Activated CD8-positive, alpha-beta T cell treated with anti-CD3 and anti-CD28 coated beads, Interleukin-2, amount 10 ng/mL, durations not matched to agents 7 days and 5 days (primary cell): ENCODE measurements at regions of chr1 and their contacts with region 1.

Region 1: GRCh38 chr1:13699936-13700520 is at the start of gene PRDM2:
- DNase-seq: peak; percentile 64
- ATAC-seq: peak; percentile 71
- H3K4me3 Mint-ChIP-seq: peak within 1 kb of the TSS; percentile 87
- H3K27ac Mint-ChIP-seq: peak within 1 kb of the TSS; percentile 93
- H3K4me1 Mint-ChIP-seq: peaks cover 47% of the 10 kb centered on the region
- H3K27me3 Mint-ChIP-seq: peaks cover 2% of the 10 kb centered on the region
- total RNA-seq, gene PRDM2: 49.3 to 50.4 TPM

Region 2: DNA sequence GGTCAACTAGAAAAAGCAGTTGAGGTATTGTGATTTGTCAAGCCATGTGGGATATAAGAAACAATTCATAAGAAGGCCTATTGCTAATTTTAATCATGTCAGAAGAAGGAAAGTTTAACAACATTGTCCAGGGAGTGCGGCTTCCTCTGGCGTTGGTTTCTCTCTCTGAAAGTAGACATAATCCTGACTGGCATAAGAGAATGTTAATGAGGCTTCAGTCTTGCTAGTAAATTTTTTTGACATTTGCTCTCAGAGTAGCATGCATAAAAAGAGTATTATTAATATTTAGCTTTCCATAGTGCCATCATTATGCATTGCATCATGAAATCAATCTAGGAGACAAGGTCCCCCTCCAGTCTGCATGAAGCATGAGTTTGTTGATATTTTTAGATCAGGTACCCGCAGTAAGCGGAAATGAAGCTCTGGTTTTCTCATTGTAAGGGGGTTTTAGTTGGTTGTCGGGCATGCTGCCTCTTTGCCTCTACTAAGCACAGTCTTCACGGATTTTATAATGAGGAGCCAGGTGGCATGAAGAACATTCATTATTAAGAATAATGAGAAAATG is 12.8 kb before region 1 on chr1:
- CTCF ChIA-PET with region 1: no interaction called
- POLR2A ChIA-PET with region 1: no interaction called
- DNase-seq: no peak
- ATAC-seq: no peak
- H3K4me3 Mint-ChIP-seq: no peak overlapping the region
- H3K27ac Mint-ChIP-seq: no peak overlapping the region
- H3K4me1 Mint-ChIP-seq: no peaks in the 10 kb centered on the region
- H3K27me3 Mint-ChIP-seq: peaks cover 11% of the 10 kb centered on the region

Region 3: DNA sequence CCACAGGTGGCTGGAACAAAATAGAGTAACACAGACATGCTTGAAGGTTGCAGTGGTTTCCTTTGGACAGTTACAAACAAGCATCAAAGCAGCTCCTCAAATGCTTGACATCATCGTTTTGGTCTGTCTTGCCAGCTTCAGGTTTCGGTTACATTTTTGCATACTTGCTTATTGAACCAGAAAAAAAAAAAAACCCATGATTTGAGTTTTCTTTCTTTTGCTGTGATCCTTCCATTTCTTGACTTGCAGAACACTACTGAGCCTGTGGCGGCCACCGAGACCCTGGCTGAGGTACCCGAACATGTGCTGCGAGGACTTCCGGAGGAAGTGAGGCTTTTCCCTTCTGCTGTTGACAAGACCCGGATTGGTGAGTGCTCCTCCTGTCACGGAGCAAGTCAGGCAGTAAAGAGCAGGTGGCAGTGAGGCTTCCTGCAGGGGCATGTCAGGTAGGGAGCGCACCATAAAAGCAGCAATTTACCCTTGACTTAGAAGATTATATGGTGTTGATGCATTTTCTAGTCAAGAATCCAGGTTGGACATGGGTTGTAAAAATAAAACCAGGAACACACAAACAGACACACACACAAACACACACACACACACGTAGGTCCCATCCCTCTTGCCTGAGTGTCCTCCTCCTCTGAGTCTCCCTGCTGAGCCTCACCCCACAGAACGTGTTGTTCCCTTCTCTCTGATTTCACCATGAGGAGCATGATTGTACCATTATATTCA is 30.9 kb after region 1 on chr1:
- CTCF ChIA-PET with region 1: interaction called, 148 read pairs
- POLR2A ChIA-PET with region 1: interaction called, 70 read pairs
- DNase-seq: peak; percentile 92
- ATAC-seq: peak; percentile 89
- H3K4me3 Mint-ChIP-seq: peak overlapping the region; percentile 77
- H3K27ac Mint-ChIP-seq: peak overlapping the region; percentile 98
- H3K4me1 Mint-ChIP-seq: peaks cover 76% of the 10 kb centered on the region
- H3K27me3 Mint-ChIP-seq: no peaks in the 10 kb centered on the region

Region 4: DNA sequence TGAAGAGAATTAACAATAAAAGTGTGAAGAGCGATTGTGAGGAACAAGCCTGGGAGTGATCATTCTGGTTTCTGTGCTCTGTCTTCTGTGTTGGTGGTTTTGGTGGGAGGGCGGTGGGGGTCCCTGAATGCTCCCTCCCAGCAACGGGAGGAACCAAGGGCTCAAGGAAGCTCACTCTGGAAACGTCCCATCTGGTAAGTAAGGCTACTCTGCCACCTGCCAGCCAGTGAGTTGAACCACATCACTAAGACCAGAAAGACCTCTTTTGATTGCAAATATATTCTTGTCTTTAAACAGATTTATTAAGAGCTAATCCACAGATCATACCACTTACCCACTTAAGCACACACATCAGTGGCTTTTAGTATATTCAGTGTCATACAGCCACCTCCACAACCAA is 125.0 kb after region 1 on chr1:
- CTCF ChIA-PET with region 1: no interaction called
- POLR2A ChIA-PET with region 1: no interaction called
- DNase-seq: no peak
- ATAC-seq: no peak
- H3K4me3 Mint-ChIP-seq: no peak overlapping the region
- H3K27ac Mint-ChIP-seq: no peak overlapping the region
- H3K4me1 Mint-ChIP-seq: no peaks in the 10 kb centered on the region
- H3K27me3 Mint-ChIP-seq: no peaks in the 10 kb centered on the region